Activated CD4-positive, alpha-beta T cell treated with anti-CD3 and anti-CD28 coated beads, Interleukin-2, amount 10 ng/mL, durations not matched to agents 24 days and 14 days (primary cell): ENCODE measurements at regions of chr3 and their contacts with region 1.

Region 1: DNA sequence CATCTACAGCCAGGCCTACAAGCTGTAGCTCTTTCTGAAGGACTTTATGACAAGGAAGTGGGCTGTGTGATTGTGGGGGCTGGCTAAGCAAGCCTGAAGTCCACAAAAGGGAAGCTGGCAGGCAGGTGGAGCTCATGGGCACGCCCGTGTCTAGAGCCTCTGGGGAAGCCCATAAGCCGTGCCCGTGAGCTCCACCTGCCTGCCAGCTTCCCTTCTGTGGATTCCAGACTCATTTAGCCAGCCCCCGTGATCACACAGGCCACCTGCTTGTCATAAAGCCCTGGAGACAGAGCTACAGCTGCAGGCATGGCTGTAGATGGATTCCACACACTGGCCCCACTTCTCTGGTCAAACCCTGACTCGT is 15.2 kb downstream of the EFCC1 start:
- DNase-seq: peak; percentile 85
- H3K4me3 Mint-ChIP-seq: peak overlapping the region; percentile 80
- H3K27ac Mint-ChIP-seq: peak overlapping the region; percentile 95
- H3K4me1 Mint-ChIP-seq: peaks cover 26% of the 10 kb centered on the region
- H3K27me3 Mint-ChIP-seq: no peaks in the 10 kb centered on the region

Region 2: GRCh38 chr3:128629936-128630335 is 386.4 kb before region 1 on chr3:
- intact Hi-C with region 1: no loop called
- DNase-seq: no peak
- H3K4me3 Mint-ChIP-seq: no peak overlapping the region
- H3K27ac Mint-ChIP-seq: no peak overlapping the region
- H3K4me1 Mint-ChIP-seq: peaks cover 5% of the 10 kb centered on the region
- H3K27me3 Mint-ChIP-seq: no peaks in the 10 kb centered on the region

Region 3: GRCh38 chr3:128950223-128950938 is 66.0 kb before region 1 on chr3:
- intact Hi-C with region 1: no loop called
- DNase-seq: peak; percentile 75
- H3K4me3 Mint-ChIP-seq: no peak overlapping the region
- H3K27ac Mint-ChIP-seq: no peak overlapping the region
- H3K4me1 Mint-ChIP-seq: no peaks in the 10 kb centered on the region
- H3K27me3 Mint-ChIP-seq: peaks cover 10% of the 10 kb centered on the region

Region 4: GRCh38 chr3:128969993-128970739 is 46.2 kb before region 1 on chr3:
- intact Hi-C with region 1: loop called (anchors 1 kb)
- DNase-seq: peak; percentile 90
- H3K4me3 Mint-ChIP-seq: no peak overlapping the region
- H3K27ac Mint-ChIP-seq: no peak overlapping the region
- H3K4me1 Mint-ChIP-seq: peaks cover 6% of the 10 kb centered on the region
- H3K27me3 Mint-ChIP-seq: peaks cover 5% of the 10 kb centered on the region

Region 5: DNA sequence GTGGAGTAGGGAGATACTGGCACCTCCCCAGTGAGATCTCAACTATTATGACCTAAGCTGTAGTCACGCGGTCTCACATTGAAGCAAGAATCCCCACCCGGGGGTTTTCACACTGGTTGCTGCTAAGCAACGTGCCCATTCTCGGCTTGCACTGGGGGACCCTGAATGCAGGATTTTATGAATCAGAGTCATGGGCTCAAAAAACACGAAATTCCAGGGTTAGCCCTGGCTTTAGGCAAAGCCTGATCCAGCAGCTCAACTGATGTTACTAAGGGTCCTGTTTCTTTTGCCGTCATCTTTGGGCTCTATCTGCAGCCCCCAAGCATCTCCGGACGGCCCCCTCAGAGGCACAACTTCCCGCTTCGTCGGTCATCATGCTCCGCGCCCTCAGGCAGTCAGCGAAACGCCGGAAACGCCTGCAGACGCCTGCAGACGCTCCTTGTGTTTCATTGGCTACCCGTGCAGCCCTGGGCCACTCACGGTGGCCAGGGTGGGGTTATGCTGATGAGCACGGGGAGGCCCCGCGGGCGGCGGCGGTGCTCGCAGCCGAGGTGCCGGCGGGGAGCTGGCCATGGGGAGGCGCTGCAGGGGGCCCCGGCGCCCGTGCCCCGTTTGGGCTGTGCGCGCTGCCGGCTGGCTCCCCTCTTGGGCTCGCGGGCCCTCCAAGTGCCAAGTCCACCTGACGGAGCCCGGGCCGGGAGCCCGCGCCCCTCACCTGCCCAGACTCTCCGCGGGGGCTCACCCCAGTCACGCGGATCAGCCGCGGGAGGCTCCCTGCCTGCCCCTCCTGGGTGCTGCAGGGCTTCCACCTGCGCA is 10.6 kb after region 1 on chr3:
- intact Hi-C with region 1: loop called (anchors 1 kb)
- DNase-seq: peak; percentile 98
- H3K4me3 Mint-ChIP-seq: peak overlapping the region; percentile 84
- H3K27ac Mint-ChIP-seq: peak overlapping the region; percentile 92
- H3K4me1 Mint-ChIP-seq: peaks cover 11% of the 10 kb centered on the region
- H3K27me3 Mint-ChIP-seq: peaks cover 9% of the 10 kb centered on the region